ENCODE measurements at regions of chr5 and their contacts with region 1.

Region 1: GRCh38 chr5:177497292-177498033 is at the start of gene PDLIM7:
- DNase-seq: peak; percentile 93
- H3K4me3 Mint-ChIP-seq: peak within 1 kb of the TSS; percentile 86
- H3K27ac Mint-ChIP-seq: peak within 1 kb of the TSS; percentile 62
- H3K4me1 Mint-ChIP-seq: peaks cover 23% of the 10 kb centered on the region
- H3K27me3 Mint-ChIP-seq: peaks cover 18% of the 10 kb centered on the region
- total RNA-seq, gene PDLIM7: 85.4 and 86.9 TPM in 2 replicates

Region 2: DNA sequence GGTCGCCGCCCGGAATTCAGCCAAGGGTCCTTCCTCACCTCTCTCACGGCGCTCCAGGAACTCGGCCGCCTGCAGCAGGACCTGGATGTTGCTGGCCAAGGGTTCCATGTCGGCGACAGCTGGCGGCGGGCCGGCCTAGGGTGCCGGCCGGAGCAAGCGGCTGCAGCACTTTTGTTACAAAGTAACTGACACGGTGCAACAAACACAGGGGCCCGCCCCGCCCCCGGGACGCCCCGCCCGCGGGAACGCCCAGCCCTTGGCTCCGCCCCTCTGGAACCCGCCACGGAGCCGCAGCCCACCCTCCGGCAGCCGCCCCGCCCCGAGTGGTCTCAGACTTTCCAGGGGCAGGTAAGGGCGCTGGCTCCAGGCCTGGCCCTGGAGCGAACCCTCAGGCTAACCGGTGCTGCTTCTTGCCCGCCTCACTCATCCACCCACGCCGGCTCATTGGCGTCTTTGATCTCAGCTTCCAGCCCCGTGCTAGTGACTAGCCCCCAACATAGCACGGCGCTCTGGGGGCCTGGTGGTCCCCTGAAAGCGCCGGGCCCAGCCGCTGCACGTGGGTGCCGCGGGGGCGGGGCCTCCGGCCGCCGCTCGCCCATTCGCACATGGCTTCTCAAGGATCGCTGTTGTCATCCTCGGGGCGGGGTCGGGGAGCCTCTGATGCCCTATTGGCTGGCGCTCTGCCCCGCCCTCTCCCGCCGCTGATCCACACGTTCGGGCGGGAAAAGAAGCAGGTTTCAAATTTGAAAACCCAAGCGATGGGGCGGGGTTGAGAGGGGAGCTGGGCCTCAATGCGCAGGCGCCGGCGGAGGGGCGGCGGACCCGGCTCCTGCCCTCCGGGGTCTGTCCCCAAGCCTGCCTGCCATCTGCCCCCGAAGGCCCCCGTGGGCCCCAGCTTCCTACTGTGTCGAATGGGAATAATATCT is 185.5 kb before region 1 on chr5 and contains the start of gene MXD3:
- intact Hi-C with region 1: loop called (anchors 2 kb)
- DNase-seq: peak; percentile 97
- H3K4me3 Mint-ChIP-seq: peak within 1 kb of the TSS; percentile 92
- H3K27ac Mint-ChIP-seq: peak within 1 kb of the TSS; percentile 89
- H3K4me1 Mint-ChIP-seq: peaks cover 39% of the 10 kb centered on the region
- H3K27me3 Mint-ChIP-seq: no peaks in the 10 kb centered on the region
- total RNA-seq, gene MXD3: 12.8 and 13.9 TPM in 2 replicates

Region 3: GRCh38 chr5:177403792-177404640 is 93.4 kb before region 1 on chr5:
- intact Hi-C with region 1: loop called (anchors 2 kb)
- DNase-seq: peak; percentile 81
- H3K4me3 Mint-ChIP-seq: peak overlapping the region; percentile 79
- H3K27ac Mint-ChIP-seq: no peak overlapping the region
- H3K4me1 Mint-ChIP-seq: peaks cover 19% of the 10 kb centered on the region
- H3K27me3 Mint-ChIP-seq: peaks cover 23% of the 10 kb centered on the region

Region 4: DNA sequence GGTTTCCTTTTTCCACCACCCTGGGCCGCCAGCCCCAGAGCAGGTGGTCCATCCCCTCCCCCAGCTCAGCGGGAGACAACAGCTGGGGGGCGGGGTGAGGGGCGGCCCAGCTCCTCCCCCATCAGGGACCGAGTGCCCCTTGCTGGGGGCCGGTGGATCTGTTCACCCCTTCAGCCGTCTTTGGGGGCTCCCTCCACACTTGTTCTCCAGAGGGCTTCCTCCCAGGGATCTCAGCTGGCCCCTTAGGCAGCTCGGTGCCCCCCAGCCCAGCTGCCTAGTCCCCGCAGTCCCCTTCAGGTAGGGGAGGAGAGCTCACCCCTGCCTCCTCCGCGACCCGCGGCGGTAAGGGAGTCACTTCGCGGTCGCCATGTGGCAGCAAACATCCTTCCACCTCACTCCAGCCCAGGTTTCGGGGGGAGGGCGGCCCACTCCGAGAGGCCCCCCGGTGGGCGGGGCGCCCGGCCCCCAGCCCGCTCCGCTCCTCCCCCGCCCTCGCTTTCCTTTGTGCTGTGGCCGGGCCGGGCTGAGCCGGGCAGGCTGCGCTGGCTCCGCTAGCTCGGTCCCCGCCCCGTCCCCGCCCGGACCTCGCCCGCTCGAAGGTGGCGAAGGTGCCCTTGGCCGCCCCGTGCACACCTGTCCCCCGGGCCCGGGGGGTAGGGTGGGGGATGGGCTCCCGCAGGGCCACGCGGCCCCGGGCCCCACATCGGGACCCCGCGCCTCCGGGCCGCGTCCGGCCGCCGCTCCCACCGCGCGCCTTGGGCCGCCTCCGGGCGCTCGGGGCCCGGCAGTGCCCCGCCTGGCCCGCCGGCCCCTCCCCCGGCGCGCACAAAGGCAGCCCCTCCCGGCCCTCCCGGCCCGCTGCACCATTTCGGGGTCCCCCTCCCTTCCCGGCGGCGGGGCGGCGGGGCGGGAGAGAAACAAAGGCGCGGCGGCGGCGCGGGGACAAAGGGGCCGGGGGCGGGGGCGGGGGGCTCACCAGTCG is 24.7 kb before region 1 on chr5:
- intact Hi-C with region 1: loop called (anchors 1 kb)
- DNase-seq: no peak
- H3K4me3 Mint-ChIP-seq: peak overlapping the region; percentile 62
- H3K27ac Mint-ChIP-seq: no peak overlapping the region
- H3K4me1 Mint-ChIP-seq: peaks cover 20% of the 10 kb centered on the region
- H3K27me3 Mint-ChIP-seq: peaks cover 7% of the 10 kb centered on the region